ENCODE measurements at regions of chr1 and their contacts with region 1.

Region 1: DNA sequence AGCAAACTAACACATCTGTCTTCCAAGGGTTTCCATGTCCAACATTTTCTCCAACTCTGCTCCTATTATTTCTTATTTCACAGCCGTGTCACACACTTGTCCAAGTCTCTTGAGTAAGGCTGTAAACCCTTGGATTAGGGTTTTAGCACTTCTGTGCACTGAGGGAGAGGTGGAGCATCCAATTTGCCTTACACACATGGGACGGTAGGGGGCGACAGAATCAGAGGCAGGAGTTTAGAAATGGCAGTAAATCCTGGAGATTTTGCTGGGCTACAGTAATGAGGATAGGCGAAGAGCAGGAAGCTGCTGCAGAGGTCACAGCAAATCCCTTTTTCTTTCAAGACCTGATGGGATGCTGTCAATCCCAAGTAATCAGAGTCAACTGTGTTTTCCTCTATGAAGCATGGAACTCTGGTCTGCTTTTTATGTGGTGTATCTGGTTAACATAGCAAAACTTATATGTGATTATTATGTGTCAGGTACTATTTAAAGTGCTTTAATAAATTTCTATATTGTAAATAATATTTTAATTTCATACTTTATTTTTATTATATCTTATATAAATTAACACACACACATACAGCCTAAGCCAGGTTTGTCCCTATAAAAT is 15.4 kb upstream of the LCE5A start:
- DNase-seq: no peak
- H3K4me3 Mint-ChIP-seq: no peak overlapping the region
- H3K27ac Mint-ChIP-seq: no peak overlapping the region
- H3K4me1 Mint-ChIP-seq: no peaks in the 10 kb centered on the region
- H3K27me3 Mint-ChIP-seq: peaks cover 2% of the 10 kb centered on the region

Region 2: DNA sequence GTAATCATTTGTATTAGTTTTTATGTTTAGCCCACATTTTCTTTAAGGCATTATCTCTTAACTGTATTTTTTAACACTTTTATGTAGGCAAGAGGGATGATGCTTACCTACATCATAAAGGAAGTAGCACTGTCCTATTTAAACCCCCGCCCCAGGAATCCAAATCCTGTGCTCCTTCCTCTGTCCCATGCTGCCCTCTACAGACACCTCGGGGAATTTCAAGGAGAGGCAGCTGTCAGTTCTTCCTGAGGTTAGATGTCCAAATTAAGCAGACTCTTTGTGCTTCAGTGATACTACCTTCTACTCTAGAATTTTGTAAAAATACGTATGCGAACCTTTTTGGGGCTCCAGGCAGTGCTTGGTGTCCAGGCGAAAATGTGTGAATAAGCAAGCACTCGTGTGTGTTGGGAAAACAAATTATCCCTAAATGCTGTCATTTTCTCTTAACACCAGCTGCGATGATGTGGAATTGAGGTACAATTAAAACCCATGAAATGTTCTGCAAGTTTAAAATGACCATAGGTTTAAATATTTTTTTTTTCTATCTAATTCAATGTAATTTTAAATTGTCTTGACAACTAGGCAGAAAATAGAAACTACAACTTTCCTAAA is 38.3 kb after region 1 on chr1:
- intact Hi-C with region 1: loop called (anchors 5 kb)
- DNase-seq: no peak
- H3K4me3 Mint-ChIP-seq: no peak overlapping the region
- H3K27ac Mint-ChIP-seq: no peak overlapping the region
- H3K4me1 Mint-ChIP-seq: no peaks in the 10 kb centered on the region
- H3K27me3 Mint-ChIP-seq: peaks cover 4% of the 10 kb centered on the region